HepG2 (cell line): ENCODE measurements at regions of chr12 and their contacts with region 1.

Region 1: DNA sequence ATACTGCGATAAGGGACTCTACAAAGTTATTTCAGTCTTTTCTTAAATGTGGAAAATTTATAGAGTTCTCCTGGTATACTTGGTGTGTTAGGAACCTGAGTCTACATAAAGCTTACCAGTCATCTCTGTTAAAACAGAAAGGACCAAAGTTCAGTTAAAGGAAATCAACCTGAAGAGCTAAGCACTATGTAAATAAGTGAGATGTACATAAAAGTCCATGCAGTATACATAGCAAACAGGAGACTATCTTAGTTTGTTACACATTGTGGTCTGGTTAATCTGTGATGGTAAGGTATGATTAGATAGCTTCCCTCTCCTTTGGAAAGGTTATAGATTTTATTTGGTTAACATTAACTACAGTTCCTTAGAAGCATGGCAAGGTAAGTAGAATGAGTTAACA is 75.9 kb downstream of the ATP2B1 start:
- DNase-seq: peak; percentile 96
- ATAC-seq: peak; percentile 99
- H3K4me3 ChIP-seq: peak overlapping the region in 2 of 3 experiments; percentile 36 to 42; a peak in 3 of 6 replicates
- H3K27ac ChIP-seq: peak overlapping the region; percentile 89
- H3K4me1 ChIP-seq: peaks cover 63% of the 10 kb centered on the region
- H3K27me3 ChIP-seq: no peaks in the 10 kb centered on the region
- CTCF ChIP-seq: no peak
- EP300 ChIP-seq: peak in 1 of 2 experiments; percentile 99; a peak in 3 of 4 replicates
- POLR2A ChIP-seq: no peak
- RAD21 ChIP-seq: no peak

Region 2: DNA sequence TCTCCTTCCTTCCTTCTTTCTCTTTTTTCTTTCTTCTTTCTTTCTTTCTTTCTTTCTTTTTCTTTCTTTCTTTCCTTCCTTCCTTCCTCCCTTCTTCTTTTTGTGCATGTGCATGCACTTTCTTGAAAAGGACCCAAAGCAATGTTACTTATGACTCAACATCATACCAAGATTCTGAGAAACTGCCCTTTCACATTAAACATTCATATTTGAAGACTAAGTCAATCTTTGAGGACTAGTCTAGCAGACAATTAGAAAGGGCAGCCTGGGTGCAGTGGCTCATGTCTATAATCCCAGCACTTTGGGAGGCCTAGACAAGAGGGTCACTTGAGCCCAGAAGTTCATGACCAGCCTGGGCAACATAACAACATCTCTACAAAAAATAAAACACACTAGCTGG is 839.7 kb before region 1 on chr12:
- CTCF ChIA-PET with region 1: no interaction called
- POLR2A ChIA-PET with region 1: no interaction called
- in situ Hi-C with region 1: no loop called
- intact Hi-C with region 1: no loop called
- DNase-seq: no peak
- ATAC-seq: no peak
- H3K4me3 ChIP-seq: no peak overlapping the region
- H3K27ac ChIP-seq: no peak overlapping the region
- H3K4me1 ChIP-seq: no peaks in the 10 kb centered on the region
- H3K27me3 ChIP-seq: no peaks in the 10 kb centered on the region
- CTCF ChIP-seq: no peak
- EP300 ChIP-seq: no peak
- POLR2A ChIP-seq: no peak
- RAD21 ChIP-seq: no peak

Region 3: GRCh38 chr12:88934163-88934747 is 698.5 kb before region 1 on chr12:
- CTCF ChIA-PET with region 1: no interaction called
- POLR2A ChIA-PET with region 1: no interaction called
- in situ Hi-C with region 1: no loop called
- intact Hi-C with region 1: no loop called
- DNase-seq: no peak
- ATAC-seq: no peak
- H3K4me3 ChIP-seq: no peak overlapping the region
- H3K27ac ChIP-seq: no peak overlapping the region
- H3K4me1 ChIP-seq: peaks cover 33% of the 10 kb centered on the region
- H3K27me3 ChIP-seq: no peaks in the 10 kb centered on the region
- CTCF ChIP-seq: no peak
- EP300 ChIP-seq: no peak
- POLR2A ChIP-seq: no peak
- RAD21 ChIP-seq: no peak

Region 4: DNA sequence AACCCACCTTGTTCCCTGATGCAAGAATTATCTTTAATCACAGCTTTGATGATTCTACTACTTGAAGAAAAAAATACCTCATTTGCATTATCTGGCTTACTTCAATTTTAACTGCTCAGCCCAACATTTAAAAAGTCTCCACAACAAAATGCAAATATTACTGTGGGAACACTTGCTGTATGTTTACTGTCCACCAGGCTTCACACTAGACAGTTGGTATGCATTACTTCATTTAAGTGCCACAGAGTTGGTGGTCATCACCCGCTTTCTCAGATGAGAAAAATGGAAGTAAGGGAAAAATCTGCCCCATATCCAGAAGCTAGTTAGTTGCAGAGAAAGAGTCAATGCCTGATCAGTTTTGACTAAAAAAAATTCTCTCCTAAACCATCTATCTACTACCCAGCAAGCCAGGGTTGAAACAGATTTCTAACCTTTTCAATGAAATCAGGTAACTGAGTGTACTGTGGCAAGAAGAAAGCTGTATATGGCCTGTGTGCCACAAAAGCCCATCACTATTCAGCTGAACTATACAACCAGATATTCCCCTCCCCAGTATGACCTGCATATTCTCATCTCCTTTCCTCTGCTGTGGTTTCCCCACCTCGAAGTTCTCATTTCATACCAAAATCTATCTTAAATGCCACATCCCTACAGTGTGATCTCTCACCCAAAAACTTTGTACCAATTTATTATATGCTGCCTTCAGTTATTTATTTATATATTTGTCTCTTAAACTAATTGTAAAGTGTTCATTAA is 14.5 kb before region 1 on chr12:
- CTCF ChIA-PET with region 1: no interaction called
- POLR2A ChIA-PET with region 1: no interaction called
- in situ Hi-C with region 1: no loop called
- intact Hi-C with region 1: no loop called
- DNase-seq: no peak
- ATAC-seq: peak; percentile 53; the same call in 1 of the 3 replicates
- H3K4me3 ChIP-seq: no peak overlapping the region
- H3K27ac ChIP-seq: no peak overlapping the region
- H3K4me1 ChIP-seq: no peaks in the 10 kb centered on the region
- H3K27me3 ChIP-seq: no peaks in the 10 kb centered on the region
- CTCF ChIP-seq: no peak
- EP300 ChIP-seq: no peak
- POLR2A ChIP-seq: no peak
- RAD21 ChIP-seq: no peak

Region 5: GRCh38 chr12:89648211-89648930 is 15.6 kb after region 1 on chr12:
- CTCF ChIA-PET with region 1: no interaction called
- POLR2A ChIA-PET with region 1: no interaction called
- in situ Hi-C with region 1: no loop called
- intact Hi-C with region 1: loop called (anchors 2 kb)
- DNase-seq: peak; percentile 56
- ATAC-seq: peak; percentile 88
- H3K4me3 ChIP-seq: no peak overlapping the region
- H3K27ac ChIP-seq: peak overlapping the region; percentile 56
- H3K4me1 ChIP-seq: peaks cover 78% of the 10 kb centered on the region
- H3K27me3 ChIP-seq: no peaks in the 10 kb centered on the region
- CTCF ChIP-seq: no peak
- EP300 ChIP-seq: no peak; a peak in 1 of 4 replicates
- POLR2A ChIP-seq: no peak
- RAD21 ChIP-seq: no peak

Region 6: GRCh38 chr12:89671469-89671868 is 38.7 kb after region 1 on chr12:
- CTCF ChIA-PET with region 1: no interaction called
- POLR2A ChIA-PET with region 1: interaction called, 3 read pairs
- in situ Hi-C with region 1: no loop called
- intact Hi-C with region 1: loop called (anchors 5 kb)
- DNase-seq: no peak
- ATAC-seq: no peak
- H3K4me3 ChIP-seq: no peak overlapping the region
- H3K27ac ChIP-seq: no peak overlapping the region
- H3K4me1 ChIP-seq: peaks cover 19% of the 10 kb centered on the region
- H3K27me3 ChIP-seq: no peaks in the 10 kb centered on the region
- CTCF ChIP-seq: no peak
- EP300 ChIP-seq: no peak
- POLR2A ChIP-seq: no peak
- RAD21 ChIP-seq: no peak

Region 7: DNA sequence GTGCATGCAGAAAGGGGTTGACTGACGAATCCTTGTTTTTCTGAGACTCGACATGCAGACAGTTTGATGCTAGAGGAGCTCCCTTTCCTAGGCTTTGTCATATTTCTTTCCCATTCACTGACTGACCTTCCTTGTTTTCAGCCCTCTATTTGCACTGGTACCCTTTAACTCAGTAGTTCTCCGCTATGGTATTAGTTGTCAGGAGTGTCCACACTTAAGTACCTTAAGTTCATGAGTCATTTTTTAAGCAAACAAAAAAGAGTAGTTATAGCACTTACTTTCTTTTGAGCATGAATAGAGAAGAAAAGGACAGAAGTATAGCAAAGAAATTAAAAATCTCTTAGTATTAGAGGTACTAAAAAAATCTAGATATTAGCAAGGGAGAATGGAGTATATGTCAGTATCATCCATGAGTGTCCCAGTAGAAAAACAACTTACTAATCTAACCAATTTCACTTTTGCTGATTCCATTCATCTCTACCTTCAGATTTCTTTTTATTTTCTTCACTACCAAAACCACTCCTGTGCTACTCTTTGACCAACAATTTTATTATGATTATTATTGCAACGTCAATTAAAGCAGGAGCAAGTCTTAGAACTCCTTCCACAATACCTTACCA is 67.5 kb after region 1 on chr12:
- CTCF ChIA-PET with region 1: no interaction called
- POLR2A ChIA-PET with region 1: no interaction called
- in situ Hi-C with region 1: no loop called
- intact Hi-C with region 1: no loop called
- DNase-seq: no peak
- ATAC-seq: no peak
- H3K4me3 ChIP-seq: no peak overlapping the region
- H3K27ac ChIP-seq: no peak overlapping the region
- H3K4me1 ChIP-seq: peaks cover 62% of the 10 kb centered on the region
- H3K27me3 ChIP-seq: no peaks in the 10 kb centered on the region
- CTCF ChIP-seq: no peak
- EP300 ChIP-seq: no peak
- POLR2A ChIP-seq: no peak
- RAD21 ChIP-seq: no peak